Ascending aorta (tissue), 2 donors: ENCODE measurements at regions of chr11 and their contacts with region 1.

Region 1: GRCh38 chr11:4493480-4493818 is 11.0 kb downstream of the OR52K1 start:
- DNase-seq: no peak
- H3K4me3 ChIP-seq: no peak overlapping the region
- H3K27ac ChIP-seq: no peak overlapping the region
- H3K4me1 ChIP-seq: no peaks in the 10 kb centered on the region
- H3K27me3 ChIP-seq: no peaks in the 10 kb centered on the region
- CTCF ChIP-seq: no peak

Region 2: DNA sequence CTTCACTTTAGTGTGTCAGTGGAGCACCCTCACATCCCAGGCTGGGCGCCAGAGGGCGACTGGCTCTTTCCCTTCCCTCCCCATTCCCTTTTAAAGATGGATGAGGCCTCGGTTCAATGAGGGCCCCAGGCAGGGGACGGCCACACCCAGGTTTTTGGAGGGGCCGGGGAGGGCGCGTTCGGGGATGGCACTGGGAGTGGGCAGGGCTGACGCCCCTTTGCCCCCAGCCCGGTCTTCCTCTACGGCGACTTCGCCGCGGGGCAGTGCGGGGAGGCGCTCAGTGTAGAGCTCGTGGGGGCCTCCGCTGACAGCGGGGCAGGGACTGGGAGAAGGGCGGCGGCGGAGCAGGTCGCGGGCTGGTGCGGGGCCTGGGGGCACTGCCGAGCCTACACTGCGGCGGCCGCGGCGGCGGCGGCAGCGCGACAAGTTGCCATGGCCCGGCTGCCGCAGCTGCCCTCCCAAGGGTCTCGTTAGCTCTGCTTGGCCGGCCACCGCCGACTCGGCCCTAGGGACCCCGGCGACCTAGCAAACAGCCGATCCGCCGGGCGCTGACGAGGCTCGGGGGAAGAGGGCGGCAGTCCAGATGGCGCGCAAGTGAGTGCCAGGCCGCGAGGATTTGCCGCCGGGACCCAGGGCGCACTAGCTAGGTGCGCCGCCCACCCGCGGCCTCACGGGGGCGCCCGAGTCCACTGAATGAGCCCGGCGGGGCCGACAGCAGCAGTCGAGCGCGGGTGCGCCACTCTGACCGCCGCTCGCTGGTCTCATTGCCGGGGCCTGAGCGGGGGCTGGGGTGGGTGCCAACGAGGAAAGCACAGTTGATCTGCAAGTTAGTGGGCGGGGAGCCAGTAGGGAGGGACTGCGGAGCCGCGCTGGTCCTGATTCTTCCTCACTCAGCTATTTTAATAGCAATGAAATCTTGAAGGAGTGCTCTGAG is 306.1 kb before region 1 on chr11:
- intact Hi-C with region 1: loop called (anchors 1 kb)
- DNase-seq: peak; percentile 66 to 96
- H3K4me3 ChIP-seq: peak overlapping the region; percentile 64 to 82
- H3K27ac ChIP-seq: no peak overlapping the region
- H3K4me1 ChIP-seq: peaks cover 0 to 7% of the 10 kb centered on the region in 2 donors
- H3K27me3 ChIP-seq: no peaks in the 10 kb centered on the region
- CTCF ChIP-seq: peak; percentile 93 to 97 (median 95)

Region 3: DNA sequence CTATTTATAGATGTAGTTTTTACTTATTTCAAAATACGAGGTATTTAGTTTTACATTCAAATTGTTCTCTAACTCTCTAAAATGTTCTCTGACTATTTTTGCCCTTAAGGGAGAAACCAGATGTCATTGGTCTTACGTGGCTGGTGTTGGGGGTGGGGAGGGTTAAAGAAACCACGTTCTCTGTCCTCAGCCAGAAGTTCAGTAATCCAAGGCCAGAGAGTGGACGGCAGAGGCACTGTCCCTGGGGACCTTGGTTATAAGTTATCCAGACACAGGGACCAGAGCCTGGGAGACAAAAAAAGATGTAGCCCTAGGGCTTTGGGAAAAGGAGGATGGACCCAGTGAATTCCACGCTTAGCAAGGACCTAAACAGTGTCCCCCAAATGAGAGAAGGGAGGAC is 149.6 kb after region 1 on chr11:
- intact Hi-C with region 1: no loop called
- DNase-seq: no peak
- H3K4me3 ChIP-seq: no peak overlapping the region
- H3K27ac ChIP-seq: no peak overlapping the region
- H3K4me1 ChIP-seq: no peaks in the 10 kb centered on the region
- H3K27me3 ChIP-seq: no peaks in the 10 kb centered on the region
- CTCF ChIP-seq: no peak